ENCODE measurements at regions of chr3 and their contacts with region 1.

Region 1: GRCh38 chr3:14203521-14204079 is 25.0 kb downstream of the LSM3 start:
- DNase-seq: peak; percentile 48
- ATAC-seq: peak; percentile 76
- H3K4me3 Mint-ChIP-seq: no peak overlapping the region
- H3K27ac Mint-ChIP-seq: no peak overlapping the region
- H3K4me1 Mint-ChIP-seq: no peaks in the 10 kb centered on the region
- H3K27me3 Mint-ChIP-seq: no peaks in the 10 kb centered on the region
- CTCF ChIP-seq: peak; percentile 85

Region 2: GRCh38 chr3:13687517-13687943 is 516.1 kb before region 1 on chr3:
- CTCF ChIA-PET with region 1: no interaction called
- POLR2A ChIA-PET with region 1: no interaction called
- intact Hi-C with region 1: no loop called
- DNase-seq: no peak
- ATAC-seq: no peak
- H3K4me3 Mint-ChIP-seq: no peak overlapping the region
- H3K27ac Mint-ChIP-seq: no peak overlapping the region
- H3K4me1 Mint-ChIP-seq: no peaks in the 10 kb centered on the region
- H3K27me3 Mint-ChIP-seq: peaks cover 5% of the 10 kb centered on the region
- CTCF ChIP-seq: no peak

Region 3: GRCh38 chr3:14178247-14179113 is 25.1 kb before region 1 on chr3 and contains the starts of genes LSM3 and XPC:
- CTCF ChIA-PET with region 1: interaction called, 21 read pairs
- POLR2A ChIA-PET with region 1: interaction called, 3 read pairs
- intact Hi-C with region 1: no loop called
- DNase-seq: peak; percentile 97
- ATAC-seq: peak; percentile 98
- H3K4me3 Mint-ChIP-seq: peak within 1 kb of the TSS; percentile 87
- H3K27ac Mint-ChIP-seq: peak within 1 kb of the TSS; percentile 96
- H3K4me1 Mint-ChIP-seq: peaks cover 57% of the 10 kb centered on the region
- H3K27me3 Mint-ChIP-seq: no peaks in the 10 kb centered on the region
- CTCF ChIP-seq: no peak
- total RNA-seq, gene LSM3: 20.0 to 20.5 TPM
- total RNA-seq, gene XPC: 23.5 to 24.8 TPM

Region 4: DNA sequence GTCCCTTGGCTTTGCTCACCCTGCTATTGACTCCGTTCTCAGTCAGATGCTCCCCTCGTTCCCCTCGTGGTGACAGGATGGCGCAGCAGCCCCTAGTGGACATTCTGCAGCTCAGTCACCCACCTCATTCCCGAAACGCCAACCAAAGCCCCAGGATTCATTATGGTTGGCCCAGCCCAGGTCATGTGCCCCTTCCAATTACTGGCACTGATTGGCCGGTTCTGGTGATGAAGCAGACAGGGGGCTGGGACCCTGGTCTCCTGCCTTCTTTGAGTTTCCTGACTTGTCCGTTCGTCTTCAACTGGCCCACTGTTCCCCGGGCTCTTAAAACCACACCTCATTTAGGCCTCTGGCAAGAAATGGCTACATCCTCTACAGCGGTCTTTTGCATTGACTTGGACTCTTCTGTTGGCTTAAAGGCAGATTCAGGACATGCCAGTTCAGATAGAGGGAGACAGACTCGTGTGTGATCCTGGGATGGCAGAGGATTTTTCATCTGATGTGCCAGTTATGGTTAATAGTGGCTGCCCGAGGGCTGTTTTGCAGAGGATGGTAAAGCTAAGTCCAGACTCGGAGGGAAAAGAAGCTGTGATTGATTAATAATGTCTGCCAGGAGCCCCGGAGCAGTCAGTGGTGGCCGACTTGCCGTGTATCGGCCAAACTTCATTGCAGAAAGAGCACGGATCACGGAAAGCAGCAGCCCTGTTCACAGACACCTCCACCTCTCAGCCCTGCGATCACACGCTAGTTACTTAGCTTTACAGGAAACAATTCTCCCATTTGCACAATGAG is 12.9 kb after region 1 on chr3:
- CTCF ChIA-PET with region 1: interaction called, 76 read pairs
- POLR2A ChIA-PET with region 1: interaction called, 3 read pairs
- intact Hi-C with region 1: no loop called
- DNase-seq: peak; percentile 29
- ATAC-seq: peak; percentile 56
- H3K4me3 Mint-ChIP-seq: peak overlapping the region; percentile 18
- H3K27ac Mint-ChIP-seq: no peak overlapping the region
- H3K4me1 Mint-ChIP-seq: no peaks in the 10 kb centered on the region
- H3K27me3 Mint-ChIP-seq: peaks cover 2% of the 10 kb centered on the region
- CTCF ChIP-seq: no peak

Region 5: GRCh38 chr3:14234251-14235002 is 30.8 kb after region 1 on chr3:
- CTCF ChIA-PET with region 1: interaction called, 24 read pairs
- POLR2A ChIA-PET with region 1: no interaction called
- intact Hi-C with region 1: no loop called
- DNase-seq: no peak
- ATAC-seq: no peak
- H3K4me3 Mint-ChIP-seq: no peak overlapping the region
- H3K27ac Mint-ChIP-seq: no peak overlapping the region
- H3K4me1 Mint-ChIP-seq: peaks cover 8% of the 10 kb centered on the region
- H3K27me3 Mint-ChIP-seq: peaks cover 29% of the 10 kb centered on the region
- CTCF ChIP-seq: no peak

Region 6: GRCh38 chr3:14467814-14468620 is 264.4 kb after region 1 on chr3:
- CTCF ChIA-PET with region 1: interaction called, 33 read pairs
- POLR2A ChIA-PET with region 1: no interaction called
- intact Hi-C with region 1: no loop called
- DNase-seq: peak; percentile 43
- ATAC-seq: peak; percentile 74
- H3K4me3 Mint-ChIP-seq: no peak overlapping the region
- H3K27ac Mint-ChIP-seq: no peak overlapping the region
- H3K4me1 Mint-ChIP-seq: no peaks in the 10 kb centered on the region
- H3K27me3 Mint-ChIP-seq: no peaks in the 10 kb centered on the region
- CTCF ChIP-seq: peak; percentile 87